ENCODE measurements at regions of chr13 and their contacts with region 1.

Region 1: GRCh38 chr13:44815623-44816022 is 173.6 kb downstream of the NUFIP1 start:
- DNase-seq: peak; percentile 67
- ATAC-seq: peak; percentile 70
- H3K4me3 ChIP-seq: 0 out of 4 replicates have a peak overlapping the region, but pooled peaks of 1 of the 2 experiments have one; percentile 4
- H3K27ac ChIP-seq: no peak overlapping the region
- H3K4me1 ChIP-seq: peaks cover 37 to 52% of the 10 kb centered on the region in 2 experiments
- H3K27me3 ChIP-seq: no peaks in the 10 kb centered on the region
- CTCF ChIP-seq: no peak
- POLR2A ChIP-seq: no peak
- RAD21 ChIP-seq: peak; percentile 26; the same call in 1 of the 2 replicates

Region 2: GRCh38 chr13:44577236-44578066 is 238.2 kb before region 1 on chr13:
- CTCF ChIA-PET with region 1: no interaction called
- POLR2A ChIA-PET with region 1: no interaction called
- RAD21 ChIA-PET with region 1: no interaction called
- intact Hi-C with region 1: loop called (anchors 5 kb)
- DNase-seq: peak; percentile 88
- ATAC-seq: peak; percentile 89
- H3K4me3 ChIP-seq: peak overlapping the region; percentile 73 to 88
- H3K27ac ChIP-seq: peak overlapping the region; percentile 87
- H3K4me1 ChIP-seq: peaks cover 3 to 15% of the 10 kb centered on the region in 2 experiments; a peak in 3 of 4 replicates
- H3K27me3 ChIP-seq: no peaks in the 10 kb centered on the region
- CTCF ChIP-seq: no peak
- POLR2A ChIP-seq: no peak
- RAD21 ChIP-seq: no peak

Region 3: DNA sequence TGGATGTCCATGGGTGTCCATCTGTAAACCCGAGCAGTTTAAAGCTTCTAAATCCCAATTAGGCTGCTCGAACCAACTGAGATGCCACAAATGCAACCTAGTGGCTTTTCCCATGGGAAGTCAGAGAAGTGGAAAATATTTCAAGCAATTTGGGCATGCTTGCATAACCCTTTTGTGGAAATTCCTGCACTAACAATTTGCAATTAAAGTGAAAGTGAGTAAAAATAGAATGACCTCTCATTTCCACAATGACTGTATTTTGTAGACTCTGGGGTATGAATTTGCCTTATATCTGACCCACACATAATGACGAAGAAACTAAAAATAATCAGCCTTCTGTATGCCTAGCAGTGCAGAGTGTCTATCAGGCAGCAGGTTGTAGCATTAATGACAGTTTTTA is 147.7 kb before region 1 on chr13:
- CTCF ChIA-PET with region 1: no interaction called
- POLR2A ChIA-PET with region 1: no interaction called
- RAD21 ChIA-PET with region 1: no interaction called
- intact Hi-C with region 1: no loop called
- DNase-seq: no peak
- ATAC-seq: no peak
- H3K4me3 ChIP-seq: no peak overlapping the region
- H3K27ac ChIP-seq: no peak overlapping the region
- H3K4me1 ChIP-seq: no peaks in the 10 kb centered on the region
- H3K27me3 ChIP-seq: no peaks in the 10 kb centered on the region
- CTCF ChIP-seq: no peak
- POLR2A ChIP-seq: no peak
- RAD21 ChIP-seq: no peak

Region 4: GRCh38 chr13:44713788-44714469 is 101.7 kb before region 1 on chr13:
- CTCF ChIA-PET with region 1: interaction called, 5 read pairs
- POLR2A ChIA-PET with region 1: interaction called, 12 read pairs
- RAD21 ChIA-PET with region 1: no interaction called
- intact Hi-C with region 1: no loop called
- DNase-seq: peak; percentile 79
- ATAC-seq: peak; percentile 82
- H3K4me3 ChIP-seq: peak overlapping the region; percentile 19 to 22; a peak in 3 of 4 replicates
- H3K27ac ChIP-seq: peak overlapping the region; percentile 59
- H3K4me1 ChIP-seq: peaks cover 34 to 63% of the 10 kb centered on the region in 2 experiments
- H3K27me3 ChIP-seq: no peaks in the 10 kb centered on the region
- CTCF ChIP-seq: no peak
- POLR2A ChIP-seq: no peak
- RAD21 ChIP-seq: peak; percentile 25; the same call in 1 of the 2 replicates

Region 5: DNA sequence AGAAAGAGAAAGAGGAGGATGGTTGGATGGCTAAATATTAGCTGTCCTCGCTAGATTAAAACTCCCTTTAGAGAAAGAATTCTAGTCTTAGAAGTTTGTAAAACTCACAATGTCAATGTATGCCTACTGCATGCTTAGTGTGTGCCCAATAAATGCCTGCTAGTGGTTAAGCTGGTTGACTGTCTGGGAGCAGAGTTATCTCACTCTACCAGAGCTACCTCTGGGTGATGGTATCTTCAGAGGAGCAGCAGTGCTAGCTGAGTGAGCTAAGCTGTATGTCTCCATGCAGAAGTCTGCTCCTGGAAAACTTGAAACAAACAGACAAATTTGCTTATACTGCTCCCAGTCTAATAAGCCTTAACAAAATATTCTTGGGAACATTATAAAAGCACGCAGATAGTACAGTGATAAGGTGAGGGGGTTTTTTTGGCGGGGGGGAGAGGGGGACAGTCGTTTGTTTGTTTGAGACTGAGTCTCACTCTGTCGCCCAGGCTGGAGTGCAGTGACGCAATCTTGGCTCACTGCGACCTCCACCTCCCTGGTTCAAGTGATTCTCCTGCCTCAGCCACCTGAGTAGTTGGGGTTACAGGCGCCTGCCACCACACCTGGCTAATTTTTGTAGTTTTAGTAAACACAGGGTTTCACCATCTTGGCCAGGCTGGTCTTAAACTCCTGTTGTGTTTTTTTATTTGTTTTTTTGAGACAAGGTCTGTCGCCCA is 36.7 kb before region 1 on chr13:
- CTCF ChIA-PET with region 1: no interaction called
- POLR2A ChIA-PET with region 1: no interaction called
- RAD21 ChIA-PET with region 1: no interaction called
- intact Hi-C with region 1: no loop called
- DNase-seq: no peak
- ATAC-seq: no peak
- H3K4me3 ChIP-seq: no peak overlapping the region
- H3K27ac ChIP-seq: no peak overlapping the region
- H3K4me1 ChIP-seq: no peaks in the 10 kb centered on the region
- H3K27me3 ChIP-seq: no peaks in the 10 kb centered on the region
- CTCF ChIP-seq: no peak
- POLR2A ChIP-seq: no peak
- RAD21 ChIP-seq: no peak

Region 6: DNA sequence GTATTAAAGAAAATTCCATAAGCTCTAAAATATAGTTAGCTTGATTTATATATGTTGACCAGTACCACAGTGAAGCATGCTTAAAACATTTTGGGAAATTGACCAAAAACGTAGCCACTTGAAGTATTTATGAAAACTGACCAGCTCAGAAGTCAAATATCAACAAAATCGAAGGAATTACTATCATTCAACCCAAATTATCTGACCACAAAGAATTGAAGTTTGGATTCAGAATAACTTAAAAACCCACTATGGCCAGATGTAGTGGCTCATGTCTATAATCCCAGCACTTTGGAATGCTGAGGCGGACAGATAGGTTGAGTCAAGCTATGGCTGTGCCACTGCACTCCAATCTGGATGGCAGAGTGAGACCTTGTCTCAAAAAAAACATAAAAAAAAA is 205.6 kb after region 1 on chr13:
- CTCF ChIA-PET with region 1: no interaction called
- POLR2A ChIA-PET with region 1: no interaction called
- RAD21 ChIA-PET with region 1: no interaction called
- intact Hi-C with region 1: no loop called
- DNase-seq: no peak
- ATAC-seq: no peak
- H3K4me3 ChIP-seq: no peak overlapping the region
- H3K27ac ChIP-seq: no peak overlapping the region
- H3K4me1 ChIP-seq: no peaks in the 10 kb centered on the region
- H3K27me3 ChIP-seq: no peaks in the 10 kb centered on the region
- CTCF ChIP-seq: no peak
- POLR2A ChIP-seq: no peak
- RAD21 ChIP-seq: no peak

Measured in HCT116 (cell line).